AG04450 (cell line): ENCODE measurements at regions of chr9 and their contacts with region 1.

Region 1: DNA sequence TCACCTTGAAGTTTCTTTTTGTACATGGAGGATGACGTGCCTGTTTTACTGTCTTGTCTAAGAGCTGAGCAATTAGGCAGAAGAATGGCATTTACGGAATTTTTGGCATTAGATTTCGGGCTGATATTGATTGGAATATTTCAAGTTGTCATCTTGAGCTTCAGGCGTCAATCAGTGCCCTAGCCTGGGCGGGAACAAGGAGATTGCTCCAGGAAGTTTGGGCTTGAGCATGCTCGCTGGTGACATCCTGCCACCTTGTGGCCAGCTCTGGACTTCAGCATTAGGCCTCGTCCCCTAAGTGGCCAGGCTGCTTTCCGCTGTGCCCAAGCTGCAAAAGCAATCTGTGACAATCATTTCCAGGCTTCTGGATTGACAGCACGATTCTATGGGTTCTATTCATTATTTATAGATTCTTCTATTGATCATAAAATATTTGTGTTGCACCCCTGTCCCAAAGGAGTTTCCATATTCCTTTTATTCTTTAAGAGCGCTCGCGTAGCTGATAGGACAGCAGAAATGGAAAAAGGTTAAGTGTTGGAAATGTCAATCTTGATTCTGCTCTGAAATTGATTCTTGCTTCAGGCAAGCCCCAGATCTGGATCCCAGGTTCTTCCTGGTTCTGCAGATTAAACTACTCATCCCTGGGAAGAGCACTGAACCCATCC is 79.3 kb downstream of the SLC28A3 start:
- DNase-seq: peak; percentile 47
- H3K4me3 ChIP-seq: peak overlapping the region; percentile 43
- H3K27ac ChIP-seq: no peak overlapping the region
- H3K27me3 ChIP-seq: no peaks in the 10 kb centered on the region
- CTCF ChIP-seq: peak; percentile 96

Region 2: DNA sequence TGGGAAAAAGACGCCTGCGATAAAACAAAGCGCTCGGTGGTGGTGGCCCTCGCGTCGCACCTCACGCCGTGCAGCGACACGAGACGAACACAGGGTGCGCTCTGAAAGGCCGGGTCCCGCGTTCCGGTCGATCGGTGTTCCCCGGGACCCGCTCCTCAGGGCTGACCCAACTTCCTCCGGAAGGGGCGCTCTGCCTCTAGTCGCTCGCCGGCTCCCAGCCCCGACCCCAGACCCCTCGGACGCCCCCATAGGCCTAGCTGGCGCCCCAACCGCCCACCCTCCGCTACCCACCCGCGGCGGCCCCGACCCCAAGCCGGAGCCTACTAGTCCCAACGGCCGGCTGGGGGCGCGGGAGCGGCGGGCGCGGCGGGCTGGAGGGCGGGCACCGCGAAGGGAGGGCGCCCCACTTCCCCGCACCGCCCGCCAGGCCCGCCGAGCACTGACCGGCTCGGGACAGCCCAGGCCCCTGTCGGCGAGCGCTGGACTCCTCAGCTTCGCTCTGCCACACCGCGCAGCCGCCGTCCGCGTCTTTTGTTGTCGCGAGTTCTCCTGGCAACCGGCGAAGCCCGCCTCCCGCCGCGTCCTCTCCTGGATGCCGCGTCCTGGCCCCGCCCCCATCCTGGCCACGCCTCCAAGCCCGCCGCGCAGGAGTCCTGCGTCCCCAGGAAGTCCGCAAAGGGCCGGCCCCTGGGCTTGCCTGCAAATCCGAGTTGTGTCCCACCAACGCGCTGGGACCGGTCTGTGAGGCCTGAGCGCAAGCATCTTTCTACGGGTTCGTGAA is 340.1 kb before region 1 on chr9 and contains the start of gene KIF27:
- CTCF ChIA-PET with region 1: interaction called, 14 read pairs
- POLR2A ChIA-PET with region 1: no interaction called
- DNase-seq: peak; percentile 94
- H3K4me3 ChIP-seq: peak within 1 kb of the TSS; percentile 70
- H3K27ac ChIP-seq: peak within 1 kb of the TSS; percentile 61
- H3K27me3 ChIP-seq: no peaks in the 10 kb centered on the region
- CTCF ChIP-seq: peak; percentile 7; the same call in 1 of the 2 replicates
- polyA plus RNA-seq, gene KIF27: 1.1 and 2.1 TPM in 2 replicates

Region 3: GRCh38 chr9:83962173-83962576 is 299.0 kb before region 1 on chr9:
- CTCF ChIA-PET with region 1: interaction called, 17 read pairs
- POLR2A ChIA-PET with region 1: interaction called, 5 read pairs
- DNase-seq: no peak
- H3K4me3 ChIP-seq: no peak overlapping the region
- H3K27ac ChIP-seq: no peak overlapping the region
- H3K27me3 ChIP-seq: no peaks in the 10 kb centered on the region
- CTCF ChIP-seq: no peak

Region 4: DNA sequence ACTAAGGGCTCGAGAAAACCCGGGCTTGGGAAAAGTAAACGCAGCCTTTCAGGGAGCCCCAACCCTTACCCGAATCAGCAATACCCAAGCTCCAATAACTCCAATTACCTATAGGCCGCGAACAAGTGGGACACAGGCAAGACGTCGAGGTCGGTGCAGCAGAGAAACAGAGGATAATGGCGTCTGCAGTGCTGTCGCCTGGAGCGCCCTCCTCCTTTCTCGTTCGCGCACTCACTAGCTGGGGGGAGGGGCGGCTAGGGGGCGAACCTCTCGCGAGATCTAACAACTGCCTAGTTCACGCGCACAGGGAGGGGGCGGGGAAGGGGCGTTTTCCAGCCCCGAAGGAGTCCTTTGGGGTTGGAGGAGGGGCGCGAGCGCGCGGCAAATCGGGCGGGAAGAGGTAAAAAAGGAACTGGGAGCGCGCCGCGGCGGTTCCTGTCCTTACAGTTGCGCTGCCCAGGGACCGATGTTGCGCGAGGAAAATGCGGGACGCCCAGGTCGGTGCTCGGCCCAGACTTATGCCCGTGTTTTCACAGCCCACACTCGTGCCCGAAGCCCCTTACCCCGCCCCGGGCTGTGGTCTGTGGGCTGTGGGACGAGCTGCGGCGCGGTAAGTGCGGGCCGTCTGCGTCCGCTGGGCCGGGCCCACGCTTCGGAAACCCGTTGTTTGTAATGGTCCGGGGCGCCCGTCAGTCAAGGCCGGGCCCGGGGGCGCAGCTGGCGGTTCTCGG is 280.7 kb before region 1 on chr9 and contains the start of gene RMI1:
- CTCF ChIA-PET with region 1: interaction called, 16 read pairs
- POLR2A ChIA-PET with region 1: interaction called, 3 read pairs
- DNase-seq: peak; percentile 97
- H3K4me3 ChIP-seq: peak within 1 kb of the TSS; percentile 98
- H3K27ac ChIP-seq: peak within 1 kb of the TSS; percentile 98
- H3K27me3 ChIP-seq: no peaks in the 10 kb centered on the region
- CTCF ChIP-seq: peak; percentile 22
- polyA plus RNA-seq, gene RMI1: 4.0 and 4.7 TPM in 2 replicates

Region 5: GRCh38 chr9:84230355-84231145 is 30.7 kb before region 1 on chr9:
- CTCF ChIA-PET with region 1: interaction called, 11 read pairs
- POLR2A ChIA-PET with region 1: no interaction called
- DNase-seq: no peak
- H3K4me3 ChIP-seq: no peak overlapping the region
- H3K27ac ChIP-seq: no peak overlapping the region
- H3K27me3 ChIP-seq: peaks cover 3% of the 10 kb centered on the region
- CTCF ChIP-seq: no peak

Region 6: GRCh38 chr9:84271531-84271900 is 10.3 kb after region 1 on chr9:
- CTCF ChIA-PET with region 1: interaction called, 12 read pairs
- POLR2A ChIA-PET with region 1: no interaction called
- DNase-seq: peak; percentile 26
- H3K4me3 ChIP-seq: peak overlapping the region; percentile 51
- H3K27ac ChIP-seq: no peak overlapping the region
- H3K27me3 ChIP-seq: no peaks in the 10 kb centered on the region
- CTCF ChIP-seq: no peak